Activated CD4-positive, alpha-beta T cell treated with anti-CD3 and anti-CD28 coated beads, Interleukin-2, amount 10 ng/mL, durations not matched to agents 24 days and 14 days (primary cell): ENCODE measurements at regions of chr12 and their contacts with region 1.

Region 1: DNA sequence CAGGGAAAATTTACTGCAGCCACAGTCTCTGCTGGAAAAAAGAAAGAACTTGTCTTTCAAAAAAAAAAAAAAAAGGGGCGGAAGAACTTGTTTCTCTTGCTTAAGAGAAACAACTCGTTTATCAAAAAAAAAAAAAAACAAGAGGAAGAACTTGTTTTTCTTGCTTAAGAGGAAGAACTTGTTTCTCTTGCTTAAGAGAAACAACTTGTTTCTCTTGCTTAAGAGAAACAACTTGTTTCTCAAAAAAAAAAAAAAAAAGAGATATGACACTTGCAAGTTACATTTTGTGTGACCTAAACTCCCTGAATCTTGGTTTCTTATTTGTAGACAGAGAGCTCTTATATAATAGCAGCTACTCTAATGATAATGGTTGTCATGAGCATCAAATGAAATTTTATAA is 44.7 kb upstream of the USP15 start:
- DNase-seq: no peak
- H3K4me3 Mint-ChIP-seq: peak overlapping the region; percentile 48
- H3K27ac Mint-ChIP-seq: peak overlapping the region; percentile 29
- H3K4me1 Mint-ChIP-seq: peaks cover 15% of the 10 kb centered on the region
- H3K27me3 Mint-ChIP-seq: peaks cover 8% of the 10 kb centered on the region

Region 2: GRCh38 chr12:62158461-62159360 is 56.8 kb before region 1 on chr12:
- intact Hi-C with region 1: no loop called
- DNase-seq: no peak
- H3K4me3 Mint-ChIP-seq: no peak overlapping the region
- H3K27ac Mint-ChIP-seq: no peak overlapping the region
- H3K4me1 Mint-ChIP-seq: peaks cover 2% of the 10 kb centered on the region
- H3K27me3 Mint-ChIP-seq: peaks cover 7% of the 10 kb centered on the region

Region 3: GRCh38 chr12:62250671-62251608 is 35.4 kb after region 1 on chr12:
- intact Hi-C with region 1: loop called (anchors 5 kb)
- DNase-seq: peak; percentile 80
- H3K4me3 Mint-ChIP-seq: peak overlapping the region; percentile 65
- H3K27ac Mint-ChIP-seq: peak overlapping the region; percentile 92
- H3K4me1 Mint-ChIP-seq: peaks cover 27% of the 10 kb centered on the region
- H3K27me3 Mint-ChIP-seq: no peaks in the 10 kb centered on the region